Aorta (tissue), 5 donors: ENCODE measurements at regions of chr17 and their contacts with region 1.

Region 1: GRCh38 chr17:28902819-28903545 is at the start of gene DHRS13:
- DNase-seq: peak; percentile 90 to 96
- ATAC-seq: peak; percentile 92
- H3K4me3 ChIP-seq: peak within 1 kb of the TSS; percentile 38 to 55
- H3K27ac ChIP-seq: peak within 1 kb of the TSS in 1 of 2 donors; percentile 25
- H3K4me1 ChIP-seq: no peaks in the 10 kb centered on the region
- H3K27me3 ChIP-seq: no peaks in the 10 kb centered on the region
- total RNA-seq, gene DHRS13: 4.3 to 6.1 TPM

Region 2: GRCh38 chr17:28812091-28812747 is 90.8 kb before region 1 on chr17:
- intact Hi-C with region 1: loop called in 1 of 2 experiments (anchors 2 kb)
- DNase-seq: peak; percentile 99
- ATAC-seq: peak; percentile 99
- H3K4me3 ChIP-seq: peak overlapping the region; percentile 97 to 99
- H3K27ac ChIP-seq: peak overlapping the region; percentile 28 to 87
- H3K4me1 ChIP-seq: peaks cover 0 to under 1% of the 10 kb centered on the region in 2 donors
- H3K27me3 ChIP-seq: no peaks in the 10 kb centered on the region

Region 3: DNA sequence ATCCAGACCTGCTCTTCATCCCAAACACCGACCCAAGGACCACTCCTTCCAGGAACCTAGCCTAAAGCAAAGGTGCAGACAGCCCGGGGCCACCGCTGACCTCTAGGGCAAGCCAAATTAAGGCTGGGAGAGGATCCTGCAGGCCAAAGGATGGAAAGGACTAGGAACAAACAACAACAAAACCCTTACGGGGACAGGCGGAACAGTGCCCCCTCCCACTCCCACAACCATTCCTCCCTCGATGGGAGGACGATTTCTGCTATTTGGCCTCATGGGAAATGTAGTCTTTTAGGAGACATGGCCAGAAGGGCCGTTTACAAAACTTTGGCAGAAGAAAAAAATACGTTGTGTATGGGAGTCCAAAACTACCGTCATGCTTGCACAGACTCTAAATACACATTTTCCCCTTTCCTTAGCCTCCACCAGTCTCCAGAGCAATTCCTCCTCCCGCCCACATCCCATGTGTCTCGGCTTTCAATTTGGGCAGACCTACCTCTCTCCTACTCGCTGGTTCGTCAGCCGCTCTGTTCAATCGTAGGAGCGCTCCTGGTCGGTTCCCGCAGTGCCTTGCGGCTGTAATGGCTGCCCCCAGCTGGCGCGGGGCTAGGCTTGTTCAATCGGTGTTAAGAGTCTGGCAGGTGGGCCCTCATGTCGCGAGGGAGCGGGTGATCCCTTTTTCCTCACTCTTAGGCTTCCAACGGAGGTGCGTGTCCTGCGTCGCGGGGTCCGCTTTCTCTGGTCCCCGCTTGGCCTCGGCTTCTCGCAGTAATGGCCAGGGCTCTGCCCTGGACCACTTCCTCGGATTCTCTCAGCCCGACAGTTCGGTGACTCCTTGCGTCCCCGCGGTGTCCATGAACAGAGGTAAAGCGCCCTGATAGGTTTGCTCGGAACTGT is 48.3 kb before region 1 on chr17 and contains the start of gene ERAL1:
- intact Hi-C with region 1: loop called in 1 of 2 experiments (anchors 5 kb)
- DNase-seq: peak; percentile 90 to 93
- ATAC-seq: peak; percentile 98
- H3K4me3 ChIP-seq: peak within 1 kb of the TSS; percentile 30 to 65
- H3K27ac ChIP-seq: peak within 1 kb of the TSS in 1 of 2 donors; percentile 55
- H3K4me1 ChIP-seq: no peaks in the 10 kb centered on the region
- H3K27me3 ChIP-seq: no peaks in the 10 kb centered on the region
- total RNA-seq, gene ERAL1: 17.1 to 20.0 TPM

Region 4: DNA sequence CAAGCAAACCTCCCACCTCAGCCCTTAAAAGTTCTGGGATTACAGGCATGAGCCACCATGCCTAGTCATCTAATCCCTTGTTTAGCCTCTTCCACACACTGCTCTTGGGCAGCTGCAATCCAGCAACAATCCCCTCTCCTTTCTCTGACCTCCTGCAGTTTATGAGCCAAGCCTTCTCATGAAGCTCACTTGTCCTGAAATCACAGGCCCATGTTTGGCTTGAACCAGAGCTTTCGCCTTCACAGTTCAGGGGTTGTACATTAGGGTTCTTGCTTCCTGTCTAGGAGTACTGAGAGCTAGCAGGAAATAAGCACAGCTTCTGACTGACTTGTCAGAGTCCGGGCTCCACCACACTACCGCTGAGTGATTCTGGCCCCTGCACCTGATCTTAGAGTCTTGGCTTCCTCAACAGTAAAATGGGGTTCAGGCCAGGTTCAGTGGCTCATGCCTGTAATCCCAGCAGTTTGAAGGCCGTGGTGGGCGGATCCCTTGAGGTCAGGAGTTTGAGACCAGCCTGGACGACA is 31.9 kb before region 1 on chr17:
- intact Hi-C with region 1: no loop called
- DNase-seq: no peak
- ATAC-seq: no peak
- H3K4me3 ChIP-seq: no peak overlapping the region
- H3K27ac ChIP-seq: no peak overlapping the region
- H3K4me1 ChIP-seq: no peaks in the 10 kb centered on the region
- H3K27me3 ChIP-seq: no peaks in the 10 kb centered on the region

Region 5: DNA sequence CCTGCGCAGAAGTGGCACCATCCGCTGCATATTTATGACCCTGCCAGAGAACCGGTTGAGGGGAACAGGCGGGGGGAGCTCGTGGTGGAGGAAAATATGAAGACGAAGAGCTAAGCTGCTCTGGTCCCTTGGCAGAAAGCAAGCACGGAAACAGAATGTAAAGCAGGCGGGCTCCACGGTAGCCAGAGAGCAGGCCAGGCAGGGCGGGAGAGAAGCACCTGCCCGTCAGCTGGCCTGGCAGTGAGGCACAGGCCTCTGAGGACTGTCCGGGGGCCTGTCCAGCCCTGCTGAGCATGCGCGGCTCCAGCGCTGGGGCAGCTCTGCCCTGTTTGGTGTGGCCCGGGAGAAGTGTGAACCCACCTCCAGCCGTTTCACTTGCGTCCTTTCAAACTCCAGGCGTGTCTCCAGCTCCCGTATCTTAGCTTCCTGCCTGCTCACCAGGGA is 186.6 kb after region 1 on chr17:
- intact Hi-C with region 1: no loop called
- DNase-seq: no peak
- ATAC-seq: no peak
- H3K4me3 ChIP-seq: no peak overlapping the region
- H3K27ac ChIP-seq: no peak overlapping the region
- H3K4me1 ChIP-seq: no peaks in the 10 kb centered on the region
- H3K27me3 ChIP-seq: no peaks in the 10 kb centered on the region

Region 6: GRCh38 chr17:29483503-29483902 is 580.5 kb after region 1 on chr17:
- intact Hi-C with region 1: no loop called
- DNase-seq: no peak
- ATAC-seq: no peak
- H3K4me3 ChIP-seq: no peak overlapping the region
- H3K27ac ChIP-seq: no peak overlapping the region
- H3K4me1 ChIP-seq: no peaks in the 10 kb centered on the region
- H3K27me3 ChIP-seq: no peaks in the 10 kb centered on the region